ENCODE measurements at regions of chr21 and their contacts with region 1.

Region 1: DNA sequence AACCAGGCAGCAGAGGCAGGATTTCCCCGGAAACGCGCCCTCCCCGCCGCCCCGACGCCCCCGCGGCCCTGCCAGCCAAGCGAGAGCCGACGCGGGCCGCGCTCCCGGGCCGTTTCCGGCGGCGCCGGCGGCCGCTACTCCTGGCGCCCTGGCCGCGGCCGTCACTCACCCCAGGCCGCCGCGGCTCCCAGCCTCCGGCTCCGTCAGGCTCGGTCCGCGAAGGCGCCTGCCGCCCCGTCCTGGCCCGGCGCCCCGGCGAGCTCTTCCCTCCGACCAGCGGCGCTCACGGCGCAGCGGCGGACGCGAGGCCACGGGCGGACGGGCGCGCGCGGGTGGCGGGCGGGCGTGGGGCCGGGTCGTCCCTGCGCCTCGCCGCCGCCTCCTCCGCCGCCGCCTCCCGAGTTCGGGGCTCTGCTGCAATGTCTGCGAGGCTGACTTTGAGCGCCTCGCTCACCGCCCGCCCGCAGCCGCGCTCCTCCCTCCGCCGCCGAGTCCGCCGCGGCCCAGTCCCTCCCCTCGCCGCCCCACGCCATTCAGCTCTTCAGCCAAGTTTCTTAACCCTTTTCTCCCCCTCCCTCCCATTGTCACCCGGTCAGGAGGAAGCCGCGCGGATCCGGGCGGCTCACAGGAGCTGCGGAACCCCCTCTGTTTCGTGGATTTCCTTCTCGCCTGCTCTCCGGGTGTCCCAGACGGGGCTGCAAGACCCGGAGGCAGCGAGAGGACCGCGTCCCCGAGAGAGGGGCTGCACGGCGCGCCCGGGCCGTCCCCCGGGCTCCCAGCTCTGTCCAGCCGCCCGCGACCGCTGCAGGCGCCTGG is at the start of gene NRIP1:
- DNase-seq: peak; percentile 83
- H3K4me3 Mint-ChIP-seq: peak within 1 kb of the TSS; percentile 72
- H3K27ac Mint-ChIP-seq: peak within 1 kb of the TSS; percentile 95
- H3K4me1 Mint-ChIP-seq: peaks cover 41% of the 10 kb centered on the region
- H3K27me3 Mint-ChIP-seq: no peaks in the 10 kb centered on the region
- CTCF ChIP-seq: no peak
- total RNA-seq, gene NRIP1: 58.7 TPM in 2 replicates

Region 2: GRCh38 chr21:15112858-15113257 is 48.1 kb after region 1 on chr21:
- CTCF ChIA-PET with region 1: no interaction called
- intact Hi-C with region 1: no loop called
- DNase-seq: no peak
- H3K4me3 Mint-ChIP-seq: no peak overlapping the region
- H3K27ac Mint-ChIP-seq: no peak overlapping the region
- H3K4me1 Mint-ChIP-seq: no peaks in the 10 kb centered on the region
- H3K27me3 Mint-ChIP-seq: no peaks in the 10 kb centered on the region
- CTCF ChIP-seq: no peak

Region 3: DNA sequence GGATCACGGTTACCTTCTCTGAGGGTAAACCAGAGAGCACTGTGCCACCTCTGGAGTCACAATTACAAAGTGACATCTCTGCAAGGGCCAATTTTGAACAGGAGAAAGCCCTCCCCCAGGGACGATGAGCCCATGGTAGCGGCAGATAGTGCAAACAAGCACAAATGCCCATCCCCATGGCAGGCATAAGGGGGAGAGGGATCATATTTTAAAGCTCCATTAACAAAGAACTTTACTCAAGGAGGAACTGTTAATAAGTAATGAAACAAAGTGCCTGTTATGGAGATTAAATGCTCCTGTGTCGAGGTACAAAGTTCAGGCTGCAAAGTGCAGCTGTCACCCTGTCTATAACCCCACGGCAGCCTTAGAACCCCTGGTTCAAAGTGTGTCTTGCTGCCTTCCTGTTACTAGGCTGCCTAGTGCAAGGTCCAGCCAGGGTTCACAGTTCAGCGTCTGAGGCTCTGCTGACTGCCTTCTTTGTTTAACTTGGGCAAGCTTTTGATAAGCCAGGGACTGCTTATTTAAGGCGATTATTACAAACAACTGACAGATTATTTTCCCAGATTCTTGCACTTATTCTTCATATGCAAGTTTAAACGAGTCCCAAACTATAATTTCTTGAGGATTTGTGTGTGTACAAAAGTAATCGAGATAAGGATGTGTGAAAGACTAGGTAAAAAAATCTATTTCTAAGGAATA is 75.7 kb after region 1 on chr21:
- CTCF ChIA-PET with region 1: no interaction called
- intact Hi-C with region 1: loop called (anchors 2 kb)
- DNase-seq: peak; percentile 53
- H3K4me3 Mint-ChIP-seq: peak overlapping the region; percentile 62
- H3K27ac Mint-ChIP-seq: peak overlapping the region; percentile 80
- H3K4me1 Mint-ChIP-seq: peaks cover 58% of the 10 kb centered on the region
- H3K27me3 Mint-ChIP-seq: no peaks in the 10 kb centered on the region
- CTCF ChIP-seq: no peak

Region 4: DNA sequence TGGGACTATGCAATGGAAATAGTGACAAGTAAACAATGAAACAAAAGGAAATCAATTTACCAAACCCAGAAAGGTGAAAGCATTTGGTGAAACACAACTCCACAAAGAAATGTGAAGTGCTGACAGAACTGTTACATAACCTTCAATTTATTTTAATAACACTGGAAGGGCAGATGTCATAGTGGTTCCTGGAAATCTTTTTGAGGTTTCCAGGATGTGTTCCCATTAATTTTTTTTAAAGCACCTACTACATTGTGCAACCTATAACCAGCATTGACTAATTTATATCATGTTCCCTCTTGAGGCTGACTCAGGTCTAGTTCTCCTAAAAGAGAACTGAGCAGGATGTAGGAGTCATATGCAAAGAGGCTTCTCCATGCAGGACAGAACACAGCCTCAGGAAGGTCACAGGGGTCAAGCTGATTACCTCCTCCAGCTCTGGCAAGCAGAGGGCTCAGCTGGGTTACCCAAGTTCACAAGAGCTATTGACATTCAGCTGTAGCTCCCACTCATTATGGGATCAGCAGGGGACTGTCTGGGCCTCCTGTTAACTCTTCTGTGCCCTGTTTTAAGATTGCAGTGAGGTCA is 157.1 kb after region 1 on chr21:
- CTCF ChIA-PET with region 1: no interaction called
- intact Hi-C with region 1: loop called (anchors 5 kb)
- DNase-seq: peak; percentile 6
- H3K4me3 Mint-ChIP-seq: no peak overlapping the region
- H3K27ac Mint-ChIP-seq: no peak overlapping the region
- H3K4me1 Mint-ChIP-seq: peaks cover 30% of the 10 kb centered on the region
- H3K27me3 Mint-ChIP-seq: no peaks in the 10 kb centered on the region
- CTCF ChIP-seq: no peak

Region 5: DNA sequence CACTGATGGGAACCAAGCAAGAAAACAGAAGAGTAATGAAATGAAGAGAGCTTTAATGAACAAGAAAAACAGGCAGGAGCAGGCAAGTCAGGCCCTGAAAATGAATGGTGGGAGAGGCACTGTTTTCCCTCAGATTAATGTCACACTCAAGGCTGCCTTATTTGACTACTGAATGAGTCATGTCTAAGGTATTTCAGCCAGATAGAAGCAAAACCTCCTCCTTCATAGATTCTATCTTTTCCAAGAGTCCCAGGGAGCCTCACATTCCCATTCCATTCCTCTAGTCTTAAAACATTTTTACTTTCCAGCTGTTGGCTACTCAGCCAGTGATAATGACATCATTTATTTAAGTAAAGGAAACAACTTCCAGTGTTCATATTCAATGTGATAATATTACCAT is 228.5 kb after region 1 on chr21:
- CTCF ChIA-PET with region 1: no interaction called
- intact Hi-C with region 1: no loop called
- DNase-seq: peak; percentile 27
- H3K4me3 Mint-ChIP-seq: no peak overlapping the region
- H3K27ac Mint-ChIP-seq: peak overlapping the region; percentile 13
- H3K4me1 Mint-ChIP-seq: peaks cover 33% of the 10 kb centered on the region
- H3K27me3 Mint-ChIP-seq: no peaks in the 10 kb centered on the region
- CTCF ChIP-seq: no peak

Region 6: DNA sequence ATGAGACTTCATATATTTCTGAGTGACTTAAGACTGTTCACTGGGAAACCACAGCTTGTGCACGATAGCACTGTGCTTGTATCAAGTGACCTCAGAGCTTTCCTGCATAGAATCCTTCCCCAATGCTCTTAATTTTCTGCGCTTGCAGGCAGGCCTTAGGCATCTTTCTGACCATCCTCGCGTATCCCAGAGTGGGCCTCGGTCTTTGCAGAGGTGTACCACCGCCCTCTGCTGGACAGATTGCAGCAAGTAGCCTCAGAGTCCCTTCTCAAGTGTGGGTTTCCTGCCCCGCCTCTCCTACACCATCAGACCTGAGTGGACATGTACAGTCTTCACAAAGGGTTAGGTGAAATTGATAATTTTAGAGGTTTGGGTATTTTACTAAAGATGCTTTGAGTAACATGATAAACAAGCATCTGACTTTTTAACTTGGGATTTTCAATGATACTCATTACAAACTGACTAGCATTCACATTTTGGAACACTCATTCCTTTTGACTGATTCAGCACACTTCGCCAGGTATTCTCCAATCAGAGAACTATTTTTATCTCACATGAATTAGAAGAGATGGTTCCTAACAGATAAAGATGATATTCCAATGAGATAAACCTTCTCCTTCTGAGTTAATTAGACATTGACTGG is 418.5 kb after region 1 on chr21:
- CTCF ChIA-PET with region 1: no interaction called
- intact Hi-C with region 1: loop called (anchors 2 kb)
- DNase-seq: peak; percentile 83
- H3K4me3 Mint-ChIP-seq: no peak overlapping the region
- H3K27ac Mint-ChIP-seq: no peak overlapping the region
- H3K4me1 Mint-ChIP-seq: no peaks in the 10 kb centered on the region
- H3K27me3 Mint-ChIP-seq: no peaks in the 10 kb centered on the region
- CTCF ChIP-seq: peak; percentile 75